ENCODE measurements at regions of chr5 and their contacts with region 1.

Region 1: GRCh38 chr5:6765612-6766525 is 52.6 kb downstream of the TENT4A start:
- DNase-seq: peak; percentile 47 to 85 (median 78)
- ATAC-seq: peak; percentile 80 to 88 (median 88)
- H3K4me3 ChIP-seq: no peak overlapping the region
- H3K27ac ChIP-seq: peak overlapping the region in 1 of 4 donors; percentile 76
- H3K4me1 ChIP-seq: peaks cover 0 to 9% (median 0%) of the 10 kb centered on the region in 3 donors
- H3K27me3 ChIP-seq: no peaks in the 10 kb centered on the region
- CTCF ChIP-seq: peak; percentile 58 to 77 (median 72)

Region 2: GRCh38 chr5:5335773-5336211 is 1430.1 kb before region 1 on chr5:
- intact Hi-C with region 1: no loop called
- DNase-seq: no peak
- ATAC-seq: peak in 3 of 4 donors; percentile 25 to 62 (median 26)
- H3K4me3 ChIP-seq: no peak overlapping the region
- H3K27ac ChIP-seq: no peak overlapping the region
- H3K4me1 ChIP-seq: no peaks in the 10 kb centered on the region
- H3K27me3 ChIP-seq: no peaks in the 10 kb centered on the region
- CTCF ChIP-seq: no peak

Region 3: DNA sequence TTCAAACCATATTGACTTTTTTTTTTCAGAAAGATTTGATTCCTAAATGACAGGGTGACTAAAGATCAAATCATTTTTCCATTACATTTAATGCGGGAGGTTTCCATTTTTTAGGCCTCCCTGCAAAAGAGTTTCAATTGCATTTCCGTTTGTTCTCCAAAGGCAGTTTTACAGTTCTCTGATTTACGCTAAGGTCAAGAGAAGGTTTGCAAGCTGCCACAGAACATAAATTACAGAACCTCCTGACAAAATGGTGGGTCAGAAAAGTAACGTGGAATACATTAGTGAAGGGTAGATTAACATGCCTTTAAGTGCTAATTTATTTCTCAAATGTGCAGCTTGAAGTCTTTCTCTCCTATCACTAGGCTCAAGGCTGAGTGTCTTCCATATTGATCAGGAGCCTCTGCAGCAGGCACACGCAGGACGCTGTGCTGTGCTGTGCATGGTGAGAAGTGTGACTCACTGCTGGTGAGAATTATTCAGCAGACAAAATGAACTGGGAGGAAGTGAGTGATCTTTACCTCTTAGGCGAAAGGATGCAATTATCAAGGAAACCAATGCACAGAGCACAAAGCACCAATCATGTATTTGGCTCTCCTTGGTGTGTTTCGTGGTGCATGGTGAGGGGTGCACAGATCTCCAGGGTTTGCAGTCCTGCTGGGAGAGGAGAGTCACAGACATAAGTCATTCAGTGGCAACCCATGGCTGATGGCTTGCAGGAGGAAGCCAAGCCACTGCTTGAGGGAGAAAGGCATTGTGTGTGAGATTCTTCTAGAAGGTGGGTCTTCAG is 83.6 kb after region 1 on chr5:
- intact Hi-C with region 1: no loop called
- DNase-seq: no peak
- ATAC-seq: no peak
- H3K4me3 ChIP-seq: no peak overlapping the region
- H3K27ac ChIP-seq: no peak overlapping the region
- H3K4me1 ChIP-seq: no peaks in the 10 kb centered on the region
- H3K27me3 ChIP-seq: no peaks in the 10 kb centered on the region
- CTCF ChIP-seq: no peak

Region 4: DNA sequence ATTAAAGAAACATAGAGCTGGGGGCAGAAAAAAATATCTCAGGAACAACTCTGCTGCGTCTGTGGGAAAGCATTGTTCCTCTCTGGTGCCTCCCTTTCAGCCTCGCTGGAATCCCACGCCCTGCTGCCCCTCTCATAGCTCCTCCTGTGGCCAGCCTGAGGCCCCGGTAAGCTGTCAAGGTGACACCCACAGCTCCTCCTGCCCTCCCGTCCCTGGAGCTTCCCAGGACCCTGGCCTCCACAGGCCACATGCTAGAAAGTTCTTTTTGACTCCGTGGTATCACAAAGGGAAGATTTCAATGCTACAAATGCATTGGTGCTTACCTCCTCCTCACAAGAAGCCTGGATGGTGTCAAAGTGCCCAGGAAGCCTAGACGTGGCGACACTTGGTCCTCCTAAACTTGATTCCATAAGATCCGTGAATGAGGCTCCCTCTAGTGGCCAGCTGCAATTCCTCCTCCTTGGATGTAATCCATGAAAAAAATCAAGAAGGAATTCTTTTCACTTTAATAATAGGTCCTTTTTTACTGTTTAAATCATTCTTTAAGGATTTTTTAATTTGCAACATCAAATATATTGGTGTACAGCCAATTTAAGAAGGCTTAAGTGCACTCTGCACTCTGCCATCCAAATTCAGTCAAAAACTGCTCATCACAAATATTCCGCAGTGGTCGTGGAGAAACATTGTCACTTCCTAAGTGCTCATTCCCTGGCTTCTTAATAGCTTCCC is 980.2 kb after region 1 on chr5:
- intact Hi-C with region 1: loop called in 1 of 3 experiments (anchors 10 kb)
- DNase-seq: peak in 5 of 6 donors; percentile 44 to 84 (median 66)
- ATAC-seq: peak; percentile 31 to 83 (median 81)
- H3K4me3 ChIP-seq: no peak overlapping the region
- H3K27ac ChIP-seq: no peak overlapping the region
- H3K4me1 ChIP-seq: no peaks in the 10 kb centered on the region
- H3K27me3 ChIP-seq: peaks cover 0 to 6% (median 0%) of the 10 kb centered on the region in 4 donors
- CTCF ChIP-seq: peak; percentile 69 to 93 (median 87)